ENCODE measurements at regions of chr12 and their contacts with region 1.

Region 1: GRCh38 chr12:57238854-57239554 is 9.5 kb downstream of the SHMT2 start:
- DNase-seq: peak; percentile 92
- H3K4me3 ChIP-seq: peak overlapping the region; percentile 61
- H3K27ac ChIP-seq: peak overlapping the region; percentile 74
- H3K4me1 ChIP-seq: peaks cover 48% of the 10 kb centered on the region
- H3K27me3 ChIP-seq: peaks cover 12% of the 10 kb centered on the region
- CTCF ChIP-seq: peak; percentile 100

Region 2: DNA sequence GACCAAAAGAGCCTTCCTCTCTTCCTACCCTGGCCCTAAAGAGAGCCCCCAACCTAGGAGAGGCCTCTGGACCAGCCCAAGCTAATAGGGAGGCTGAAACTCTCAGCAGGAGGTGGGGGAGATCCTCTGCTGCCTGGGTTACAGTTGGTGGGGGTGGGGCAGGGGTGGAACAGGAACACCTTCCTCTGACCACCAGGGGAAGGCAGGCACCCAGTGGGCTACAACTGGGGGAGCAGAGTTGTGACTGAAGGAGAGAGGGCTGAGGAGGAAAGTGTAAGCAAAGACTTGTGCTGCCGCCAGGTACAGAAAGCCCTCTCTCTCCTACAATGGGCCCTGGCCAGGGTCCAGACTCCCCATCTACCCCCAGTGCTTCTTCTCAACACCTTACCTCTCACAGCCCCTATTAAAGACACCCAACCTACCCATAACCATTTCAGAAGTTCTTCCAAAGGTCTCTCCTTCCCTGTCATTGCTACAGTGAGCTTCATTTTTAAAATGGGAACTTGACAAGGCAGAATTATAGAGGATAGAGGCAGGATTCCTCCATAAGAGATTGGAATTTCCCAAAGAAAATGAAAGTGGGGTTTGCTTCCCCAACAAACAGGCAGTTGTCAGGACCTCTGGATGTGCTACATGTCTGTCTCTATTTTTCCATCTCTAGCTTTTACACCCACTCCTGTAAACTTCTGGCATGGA is 190.4 kb before region 1 on chr12:
- CTCF ChIA-PET with region 1: interaction called, 11 read pairs
- POLR2A ChIA-PET with region 1: no interaction called
- intact Hi-C with region 1: no loop called
- DNase-seq: no peak
- H3K4me3 ChIP-seq: no peak overlapping the region
- H3K27ac ChIP-seq: no peak overlapping the region
- H3K4me1 ChIP-seq: no peaks in the 10 kb centered on the region
- H3K27me3 ChIP-seq: no peaks in the 10 kb centered on the region
- CTCF ChIP-seq: no peak

Region 3: GRCh38 chr12:57124259-57124877 is 114.6 kb before region 1 on chr12:
- CTCF ChIA-PET with region 1: interaction called, 16 read pairs
- POLR2A ChIA-PET with region 1: no interaction called
- intact Hi-C with region 1: loop called (anchors 5 kb)
- DNase-seq: peak; percentile 86
- H3K4me3 ChIP-seq: no peak overlapping the region
- H3K27ac ChIP-seq: no peak overlapping the region
- H3K4me1 ChIP-seq: peaks cover 4% of the 10 kb centered on the region
- H3K27me3 ChIP-seq: no peaks in the 10 kb centered on the region
- CTCF ChIP-seq: peak; percentile 93

Region 4: DNA sequence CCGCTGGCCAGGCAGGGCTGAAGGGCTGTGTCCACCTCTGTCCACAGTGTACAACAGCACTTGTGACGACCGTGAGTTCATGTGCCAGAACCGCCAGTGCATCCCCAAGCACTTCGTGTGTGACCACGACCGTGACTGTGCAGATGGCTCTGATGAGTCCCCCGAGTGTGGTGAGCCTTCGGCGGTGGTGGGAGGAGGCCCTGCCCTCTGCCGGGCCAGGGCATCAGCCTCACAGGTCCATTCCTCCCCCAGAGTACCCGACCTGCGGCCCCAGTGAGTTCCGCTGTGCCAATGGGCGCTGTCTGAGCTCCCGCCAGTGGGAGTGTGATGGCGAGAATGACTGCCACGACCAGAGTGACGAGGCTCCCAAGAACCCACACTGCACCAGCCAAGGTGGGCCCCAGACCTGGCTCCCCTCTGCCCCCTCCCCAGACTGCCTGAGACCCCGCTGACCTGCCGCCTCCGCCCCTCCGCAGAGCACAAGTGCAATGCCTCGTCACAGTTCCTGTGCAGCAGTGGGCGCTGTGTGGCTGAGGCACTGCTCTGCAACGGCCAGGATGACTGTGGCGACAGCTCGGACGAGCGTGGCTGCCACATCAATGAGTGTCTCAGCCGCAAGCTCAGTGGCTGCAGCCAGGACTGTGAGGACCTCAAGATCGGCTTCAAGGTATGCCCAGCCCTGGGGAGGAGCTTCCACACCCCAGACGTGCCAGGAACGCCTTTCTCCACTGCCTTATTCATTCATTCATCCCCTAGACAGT is 43.2 kb before region 1 on chr12:
- CTCF ChIA-PET with region 1: interaction called, 14 read pairs
- POLR2A ChIA-PET with region 1: no interaction called
- intact Hi-C with region 1: no loop called
- DNase-seq: no peak
- H3K4me3 ChIP-seq: no peak overlapping the region
- H3K27ac ChIP-seq: no peak overlapping the region
- H3K4me1 ChIP-seq: no peaks in the 10 kb centered on the region
- H3K27me3 ChIP-seq: no peaks in the 10 kb centered on the region
- CTCF ChIP-seq: no peak

Region 5: GRCh38 chr12:57213058-57213715 is 25.8 kb before region 1 on chr12:
- CTCF ChIA-PET with region 1: interaction called, 50 read pairs
- POLR2A ChIA-PET with region 1: interaction called, 5 read pairs
- intact Hi-C with region 1: loop called (anchors 1 kb)
- DNase-seq: peak; percentile 90
- H3K4me3 ChIP-seq: no peak overlapping the region
- H3K27ac ChIP-seq: no peak overlapping the region
- H3K4me1 ChIP-seq: peaks cover 28% of the 10 kb centered on the region
- H3K27me3 ChIP-seq: peaks cover 19% of the 10 kb centered on the region
- CTCF ChIP-seq: peak; percentile 95

Region 6: GRCh38 chr12:57272337-57273151 is 33.5 kb after region 1 on chr12:
- CTCF ChIA-PET with region 1: interaction called, 10 read pairs
- POLR2A ChIA-PET with region 1: no interaction called
- intact Hi-C with region 1: no loop called
- DNase-seq: no peak
- H3K4me3 ChIP-seq: no peak overlapping the region
- H3K27ac ChIP-seq: no peak overlapping the region
- H3K4me1 ChIP-seq: no peaks in the 10 kb centered on the region
- H3K27me3 ChIP-seq: no peaks in the 10 kb centered on the region
- CTCF ChIP-seq: no peak

Region 7: GRCh38 chr12:57452937-57453509 is 214.0 kb after region 1 on chr12:
- CTCF ChIA-PET with region 1: interaction called, 7 read pairs
- POLR2A ChIA-PET with region 1: interaction called, 17 read pairs
- intact Hi-C with region 1: no loop called
- DNase-seq: peak; percentile 82
- H3K4me3 ChIP-seq: no peak overlapping the region
- H3K27ac ChIP-seq: no peak overlapping the region
- H3K4me1 ChIP-seq: peaks cover 29% of the 10 kb centered on the region
- H3K27me3 ChIP-seq: no peaks in the 10 kb centered on the region
- CTCF ChIP-seq: peak; percentile 88

Measured in A673 (cell line).